CD8-positive, alpha-beta memory T cell (primary cell): ENCODE measurements at regions of chr19 and their contacts with region 1.

Region 1: DNA sequence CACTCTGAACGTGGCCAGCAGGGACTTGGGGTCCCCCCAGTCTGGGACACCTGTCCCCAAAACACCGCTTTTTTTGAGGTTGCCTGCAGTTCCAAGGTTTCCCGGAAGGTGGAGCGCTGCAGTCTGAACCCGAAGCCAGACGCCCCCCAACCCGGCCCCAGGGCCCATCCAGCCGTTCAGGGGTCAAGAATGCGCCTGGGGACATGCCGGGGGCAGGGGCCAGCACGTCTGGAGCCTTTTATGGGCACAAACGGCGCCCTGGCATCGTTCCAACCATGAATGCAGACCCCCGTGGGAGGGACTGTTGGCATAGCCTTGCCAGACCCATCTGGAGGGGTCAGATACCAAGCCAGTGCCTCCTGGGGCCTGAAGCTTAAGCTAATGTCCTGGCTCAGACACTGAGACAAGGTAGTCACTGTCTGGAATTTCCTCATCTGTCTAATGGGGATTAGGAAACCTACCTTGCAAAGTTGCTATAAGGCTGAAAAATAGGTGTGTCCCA is 6.9 kb downstream of the S1PR5 start:
- DNase-seq: peak in 4 of 5 donors; percentile 41 to 73 (median 56)
- H3K4me3 ChIP-seq: no peak overlapping the region
- H3K4me3 Mint-ChIP-seq: peak overlapping the region in 3 of 7 donors; percentile 48 to 82 (median 58)
- H3K27ac ChIP-seq: no peak overlapping the region
- H3K27ac Mint-ChIP-seq: peak overlapping the region in 6 of 8 donors; percentile 30 to 93 (median 82)
- H3K4me1 ChIP-seq: peaks cover 29% of the 10 kb centered on the region
- H3K4me1 Mint-ChIP-seq: peaks cover 29 to 51% (median 36%) of the 10 kb centered on the region in 3 donors
- H3K27me3 ChIP-seq: peaks cover 14% of the 10 kb centered on the region
- H3K27me3 Mint-ChIP-seq: peaks cover 8 to 18% of the 10 kb centered on the region in 2 donors

Region 2: GRCh38 chr19:10551698-10552301 is 41.4 kb after region 1 on chr19:
- CTCF ChIA-PET with region 1: interaction called, 18 read pairs
- POLR2A ChIA-PET with region 1: no interaction called
- DNase-seq: peak in 3 of 5 donors; percentile 33 to 62 (median 48)
- H3K4me3 ChIP-seq: no peak overlapping the region
- H3K4me3 Mint-ChIP-seq: peak overlapping the region in 1 of 7 donors; percentile 61
- H3K27ac ChIP-seq: no peak overlapping the region
- H3K27ac Mint-ChIP-seq: peak overlapping the region; percentile 56 to 98 (median 78)
- H3K4me1 ChIP-seq: peaks cover 56% of the 10 kb centered on the region
- H3K4me1 Mint-ChIP-seq: peaks cover 43 to 65% (median 53%) of the 10 kb centered on the region in 3 donors
- H3K27me3 ChIP-seq: no peaks in the 10 kb centered on the region
- H3K27me3 Mint-ChIP-seq: no peaks in the 10 kb centered on the region

Region 3: GRCh38 chr19:10713317-10713716 is 203.0 kb after region 1 on chr19:
- CTCF ChIA-PET with region 1: no interaction called
- POLR2A ChIA-PET with region 1: no interaction called
- DNase-seq: no peak
- H3K4me3 ChIP-seq: no peak overlapping the region
- H3K4me3 Mint-ChIP-seq: no peak overlapping the region
- H3K27ac ChIP-seq: no peak overlapping the region
- H3K27ac Mint-ChIP-seq: peak overlapping the region in 1 of 8 donors; percentile 47
- H3K4me1 ChIP-seq: peaks cover 5% of the 10 kb centered on the region
- H3K4me1 Mint-ChIP-seq: peaks cover 4 to 7% (median 7%) of the 10 kb centered on the region in 3 donors
- H3K27me3 ChIP-seq: no peaks in the 10 kb centered on the region
- H3K27me3 Mint-ChIP-seq: no peaks in the 10 kb centered on the region